Adrenal gland (tissue), 19 donors: ENCODE measurements at regions of chr14 and their contacts with region 1.

Region 1: GRCh38 chr14:49633640-49634546 is 1.2 kb downstream of the DNAAF2 start:
- DNase-seq: peak; percentile 92 to 95 (median 93)
- H3K4me3 ChIP-seq: peak overlapping the region; percentile 43 to 91 (median 87)
- H3K27ac ChIP-seq: peak overlapping the region; percentile 73 to 99 (median 98)
- H3K4me1 ChIP-seq: peaks cover 24 to 33% of the 10 kb centered on the region in 2 donors
- H3K27me3 ChIP-seq: no peaks in the 10 kb centered on the region
- CTCF ChIP-seq: peak; percentile 48 to 81 (median 76)
- POLR2A ChIP-seq: peak; percentile 88 to 89

Region 2: DNA sequence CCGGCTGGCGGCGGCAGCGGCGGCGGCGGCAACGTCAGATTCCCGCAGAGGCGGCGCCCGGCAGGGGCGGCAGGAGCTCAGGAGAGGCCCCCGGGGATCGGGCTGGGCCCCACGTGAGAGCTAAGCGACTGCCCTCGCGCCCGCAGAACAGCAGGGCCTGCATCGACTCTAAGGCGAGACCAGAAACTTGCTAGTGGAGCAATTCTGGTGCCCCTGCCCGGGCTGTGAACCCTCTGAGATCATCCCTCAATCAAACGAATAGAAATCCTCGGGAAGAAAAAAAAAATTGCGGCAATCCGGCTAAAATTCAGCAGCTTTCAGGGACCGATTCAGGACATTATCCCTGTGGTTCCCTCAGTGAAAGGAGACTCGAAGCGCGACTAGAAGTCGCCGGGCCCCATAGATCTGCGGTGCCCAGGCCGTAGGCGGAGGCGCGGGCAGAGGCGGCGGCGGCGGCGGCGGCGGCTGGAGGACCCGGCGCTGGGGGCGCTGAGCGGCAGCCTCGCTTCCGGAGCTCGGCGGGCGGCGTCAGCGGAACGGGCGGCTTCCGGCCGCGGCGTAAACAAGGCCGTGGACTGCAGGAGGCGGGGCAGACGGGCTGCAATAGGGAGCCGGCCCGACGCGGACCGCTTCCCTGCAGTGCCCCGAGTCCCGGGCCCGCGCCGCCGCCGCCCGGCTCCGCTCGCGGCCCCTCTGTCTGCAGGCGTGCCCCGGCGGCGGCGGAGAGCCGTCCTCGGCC is 133.8 kb after region 1 on chr14 and contains the start of gene KLHDC2:
- intact Hi-C with region 1: loop called (anchors 5 to 10 kb)
- DNase-seq: peak; percentile 88 to 93 (median 91)
- H3K4me3 ChIP-seq: peak within 1 kb of the TSS; percentile 33 to 100 (median 86)
- H3K27ac ChIP-seq: peak within 1 kb of the TSS; percentile 87 to 99 (median 98)
- H3K4me1 ChIP-seq: peaks cover 26 to 34% of the 10 kb centered on the region in 2 donors
- H3K27me3 ChIP-seq: no peaks in the 10 kb centered on the region
- CTCF ChIP-seq: peak in 3 of 6 experiments; percentile 25 to 33 (median 31)
- POLR2A ChIP-seq: peak; percentile 92 to 97
- total RNA-seq, gene KLHDC2: 54.3 to 134 (median 68.8) TPM

Region 3: GRCh38 chr14:50060871-50061663 is 427.2 kb after region 1 on chr14:
- intact Hi-C with region 1: no loop called
- DNase-seq: peak; percentile 58 to 87 (median 82)
- H3K4me3 ChIP-seq: no peak overlapping the region
- H3K27ac ChIP-seq: peak overlapping the region; percentile 74 to 95 (median 85)
- H3K4me1 ChIP-seq: peaks cover 20 to 33% of the 10 kb centered on the region in 2 donors
- H3K27me3 ChIP-seq: no peaks in the 10 kb centered on the region
- CTCF ChIP-seq: peak; percentile 19 to 58 (median 48)
- POLR2A ChIP-seq: peak in 1 of 2 donors; percentile 24